Activated naive CD8-positive, alpha-beta T cell treated with anti-CD3 and anti-CD28 coated beads, Interleukin-2, amount 10 ng/mL, durations not matched to agents 7 days and 5 days (primary cell): ENCODE measurements at regions of chr1 and their contacts with region 1.

Region 1: DNA sequence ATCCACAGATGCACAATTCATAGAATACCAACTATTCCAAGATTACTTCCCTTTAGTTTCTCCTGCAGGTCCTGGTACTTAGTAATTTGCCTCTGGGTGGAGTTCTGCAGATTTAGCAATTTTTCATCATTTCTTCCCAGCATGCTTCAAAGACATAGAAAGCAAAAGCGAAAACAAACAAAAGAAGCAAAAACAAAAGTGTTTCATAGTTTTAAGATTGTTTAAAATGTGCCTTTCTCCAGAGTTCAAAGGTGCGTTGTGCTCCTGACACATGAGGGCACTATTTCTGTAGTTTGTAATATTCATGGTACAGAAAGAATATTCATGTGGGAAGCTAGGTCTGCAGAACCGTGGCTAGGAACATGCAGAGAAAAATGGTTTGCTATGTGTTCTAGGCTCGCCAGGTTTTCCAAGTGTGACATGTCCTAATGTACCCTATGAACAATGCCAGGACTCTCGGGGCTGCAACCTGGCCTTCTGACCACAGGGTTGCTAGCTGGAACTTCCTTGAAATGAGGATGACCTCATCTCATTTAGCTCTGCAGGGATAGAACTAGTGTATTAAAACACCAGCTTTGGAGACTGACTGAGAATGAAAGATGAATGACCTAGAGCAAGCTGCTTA is 30.0 kb upstream of the RCSD1 start:
- DNase-seq: peak; percentile 46
- ATAC-seq: peak; percentile 79
- H3K4me3 Mint-ChIP-seq: peak overlapping the region; percentile 76
- H3K27ac Mint-ChIP-seq: peak overlapping the region; percentile 82
- H3K4me1 Mint-ChIP-seq: peaks cover 37% of the 10 kb centered on the region
- H3K27me3 Mint-ChIP-seq: no peaks in the 10 kb centered on the region

Region 2: GRCh38 chr1:167538656-167539055 is 61.4 kb before region 1 on chr1:
- POLR2A ChIA-PET with region 1: no interaction called
- DNase-seq: no peak
- ATAC-seq: no peak
- H3K4me3 Mint-ChIP-seq: no peak overlapping the region
- H3K27ac Mint-ChIP-seq: no peak overlapping the region
- H3K4me1 Mint-ChIP-seq: peaks cover 30% of the 10 kb centered on the region
- H3K27me3 Mint-ChIP-seq: peaks cover 3% of the 10 kb centered on the region

Region 3: GRCh38 chr1:167617153-167618147 is 17.4 kb after region 1 on chr1:
- POLR2A ChIA-PET with region 1: interaction called, 15 read pairs
- DNase-seq: peak; percentile 44
- ATAC-seq: peak; percentile 81
- H3K4me3 Mint-ChIP-seq: peak overlapping the region; percentile 83
- H3K27ac Mint-ChIP-seq: peak overlapping the region; percentile 94
- H3K4me1 Mint-ChIP-seq: peaks cover 49% of the 10 kb centered on the region
- H3K27me3 Mint-ChIP-seq: no peaks in the 10 kb centered on the region